GM13976 (cell line): ENCODE measurements at regions of chr17 and their contacts with region 1.

Region 1: DNA sequence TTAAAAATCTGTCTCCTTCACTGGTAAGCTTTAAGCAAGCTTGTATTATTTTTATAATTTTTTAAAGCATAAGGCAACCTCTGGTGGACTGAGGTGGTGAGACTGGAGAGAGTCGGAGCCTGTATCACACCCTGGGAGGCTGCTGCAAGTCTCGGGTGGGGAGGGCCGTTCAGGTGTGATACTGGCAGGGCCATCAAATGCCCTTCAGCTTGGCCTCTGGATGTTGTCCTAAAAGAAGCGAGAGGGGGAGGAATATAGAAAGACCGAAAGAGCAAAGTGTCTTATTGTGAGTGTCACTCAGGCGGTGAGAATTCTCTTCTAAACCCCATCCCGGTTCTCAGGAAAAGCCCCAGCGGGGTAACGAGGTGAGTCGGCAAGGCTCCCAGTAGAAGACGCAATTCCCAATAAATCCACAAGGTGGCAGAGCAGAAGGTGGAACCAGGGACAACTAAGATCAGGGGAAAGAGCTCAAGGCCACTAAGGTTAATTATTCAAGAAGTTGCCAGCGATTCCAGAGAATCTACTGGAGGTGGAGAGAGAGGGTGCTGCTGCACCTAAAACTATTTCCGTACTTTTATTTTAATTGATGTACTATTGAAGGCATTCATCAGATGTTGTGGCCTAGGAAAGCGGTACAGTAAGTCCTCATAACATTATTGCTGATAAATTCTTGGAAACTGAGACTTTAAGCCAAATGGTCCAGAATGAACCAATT is 14.1 kb downstream of the C17orf67 start:
- DNase-seq: peak; percentile 80
- CTCF ChIP-seq: peak; percentile 69

Region 2: GRCh38 chr17:56939901-56940343 is 120.3 kb after region 1 on chr17:
- in situ Hi-C with region 1: loop called (anchors 10 kb)
- DNase-seq: peak; percentile 74
- CTCF ChIP-seq: peak; percentile 34